CD4-positive, alpha-beta memory T cell (primary cell): ENCODE measurements at regions of chr14 and their contacts with region 1.

Region 1: DNA sequence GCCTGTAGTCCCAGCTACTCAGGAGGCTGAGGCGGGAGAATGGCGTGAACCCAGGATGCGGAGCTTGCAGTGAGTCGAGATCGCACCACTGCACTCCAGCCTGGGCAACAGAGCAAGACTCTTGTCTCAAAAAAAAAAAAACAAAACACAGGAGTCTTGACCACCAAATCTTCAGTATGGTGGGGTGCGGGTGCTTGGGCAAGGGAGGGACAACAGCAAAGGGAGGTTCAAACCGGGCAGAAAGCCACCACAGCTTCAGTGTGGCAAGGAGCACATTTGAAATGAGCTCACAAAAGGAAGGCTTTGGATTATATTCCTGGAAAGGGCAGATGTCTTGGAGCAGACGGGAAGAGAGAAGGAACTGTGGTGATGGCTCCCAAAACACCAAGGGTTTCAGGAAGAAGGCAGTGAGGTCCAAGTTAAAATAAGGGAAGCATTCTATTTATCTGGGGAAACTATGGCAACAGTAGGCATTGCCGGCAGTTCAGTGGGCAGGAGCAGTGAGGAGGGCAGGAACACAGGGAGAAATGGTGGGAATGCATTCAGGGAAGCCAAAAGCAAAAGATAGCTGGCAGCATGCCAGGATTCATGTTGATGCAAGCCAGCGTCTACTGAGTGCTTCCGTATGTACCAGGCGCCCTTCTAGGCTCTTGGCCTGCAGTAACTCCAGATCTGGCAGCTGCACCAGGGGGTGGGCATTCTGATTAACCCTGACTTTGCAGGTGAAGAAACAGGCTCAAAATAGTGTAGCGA is 51.0 kb upstream of the SRSF5 start:
- DNase-seq: peak in 1 of 5 donors; percentile 42
- H3K4me3 ChIP-seq: no peak overlapping the region
- H3K4me3 Mint-ChIP-seq: peak overlapping the region in 5 of 8 donors; percentile 5 to 51 (median 21)
- H3K27ac ChIP-seq: no peak overlapping the region
- H3K27ac Mint-ChIP-seq: peak overlapping the region; percentile 38 to 85 (median 77)
- H3K4me1 ChIP-seq: peaks cover 33% of the 10 kb centered on the region
- H3K4me1 Mint-ChIP-seq: peaks cover 27 to 62% (median 47%) of the 10 kb centered on the region in 4 donors
- H3K27me3 ChIP-seq: no peaks in the 10 kb centered on the region
- H3K27me3 Mint-ChIP-seq: no peaks in the 10 kb centered on the region

Region 2: DNA sequence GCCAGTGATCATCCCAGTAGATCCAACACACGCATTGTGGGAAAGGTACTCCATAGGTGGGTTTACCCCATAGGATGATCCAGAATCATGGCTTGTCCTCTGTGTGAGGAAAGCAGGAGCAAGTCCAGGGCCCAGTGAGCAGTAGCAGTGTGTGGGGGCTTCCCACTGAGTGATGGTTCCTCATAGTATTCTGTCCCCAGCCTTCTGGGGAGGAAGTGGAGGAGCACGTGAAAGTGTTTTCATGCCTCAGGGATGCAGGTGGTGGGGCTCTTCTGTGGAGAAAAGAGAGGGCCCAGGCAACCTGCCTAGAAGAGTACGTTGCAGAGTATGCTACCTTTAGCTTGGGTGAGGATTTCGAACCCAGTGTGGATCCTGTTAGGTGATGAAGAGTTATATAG is 48.0 kb before region 1 on chr14:
- CTCF ChIA-PET with region 1: no interaction called
- POLR2A ChIA-PET with region 1: no interaction called
- intact Hi-C with region 1: no loop called
- DNase-seq: no peak
- H3K4me3 ChIP-seq: peak overlapping the region in 1 of 2 donors; percentile 23
- H3K4me3 Mint-ChIP-seq: peak overlapping the region; percentile 57 to 83 (median 70)
- H3K27ac ChIP-seq: peak overlapping the region; percentile 40
- H3K27ac Mint-ChIP-seq: peak overlapping the region; percentile 57 to 93 (median 83)
- H3K4me1 ChIP-seq: peaks cover 95% of the 10 kb centered on the region
- H3K4me1 Mint-ChIP-seq: peaks cover 74 to 98% (median 87%) of the 10 kb centered on the region in 4 donors
- H3K27me3 ChIP-seq: no peaks in the 10 kb centered on the region
- H3K27me3 Mint-ChIP-seq: no peaks in the 10 kb centered on the region

Region 3: GRCh38 chr14:69695322-69696203 is 20.3 kb before region 1 on chr14:
- CTCF ChIA-PET with region 1: no interaction called
- POLR2A ChIA-PET with region 1: no interaction called
- intact Hi-C with region 1: loop called (anchors 2 kb)
- DNase-seq: no peak
- H3K4me3 ChIP-seq: no peak overlapping the region
- H3K4me3 Mint-ChIP-seq: peak overlapping the region in 6 of 8 donors; percentile 2 to 69 (median 40)
- H3K27ac ChIP-seq: no peak overlapping the region
- H3K27ac Mint-ChIP-seq: peak overlapping the region in 6 of 7 donors; percentile 15 to 87 (median 76)
- H3K4me1 ChIP-seq: peaks cover 66% of the 10 kb centered on the region
- H3K4me1 Mint-ChIP-seq: peaks cover 60 to 87% (median 75%) of the 10 kb centered on the region in 4 donors
- H3K27me3 ChIP-seq: no peaks in the 10 kb centered on the region
- H3K27me3 Mint-ChIP-seq: no peaks in the 10 kb centered on the region

Region 4: DNA sequence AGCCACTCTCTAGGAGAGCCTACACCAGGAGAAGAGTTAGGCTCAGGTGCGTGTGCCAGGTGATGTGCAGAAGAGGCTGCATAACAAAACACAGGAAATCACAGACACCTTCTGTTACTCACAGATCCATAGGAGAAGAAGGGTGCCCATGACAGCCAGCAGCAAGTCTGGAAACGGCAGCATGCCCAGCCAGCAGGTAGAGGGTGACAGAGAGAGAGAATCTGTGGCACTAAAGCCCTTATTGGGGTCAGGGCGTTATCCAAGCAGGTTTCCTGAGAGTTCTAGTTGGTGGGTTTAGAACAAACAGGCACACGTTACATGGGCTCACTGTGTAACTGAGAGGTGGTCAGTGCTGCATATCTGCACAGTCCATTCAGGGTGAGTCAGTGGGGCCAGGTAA is 487.8 kb after region 1 on chr14:
- CTCF ChIA-PET with region 1: no interaction called
- POLR2A ChIA-PET with region 1: no interaction called
- intact Hi-C with region 1: no loop called
- DNase-seq: no peak
- H3K4me3 ChIP-seq: no peak overlapping the region
- H3K4me3 Mint-ChIP-seq: no peak overlapping the region
- H3K27ac ChIP-seq: no peak overlapping the region
- H3K27ac Mint-ChIP-seq: no peak overlapping the region
- H3K4me1 ChIP-seq: no peaks in the 10 kb centered on the region
- H3K4me1 Mint-ChIP-seq: no peaks in the 10 kb centered on the region
- H3K27me3 ChIP-seq: peaks cover 4% of the 10 kb centered on the region
- H3K27me3 Mint-ChIP-seq: peaks cover 27 to 33% of the 10 kb centered on the region in 2 donors